ENCODE measurements at regions of chr6 and their contacts with region 1.

Region 1: GRCh38 chr6:113858480-113859348 is 1.6 kb downstream of the MARCKS start:
- DNase-seq: peak; percentile 90
- H3K4me3 Mint-ChIP-seq: no peak overlapping the region
- H3K27ac Mint-ChIP-seq: no peak overlapping the region
- H3K4me1 Mint-ChIP-seq: peaks cover 6% of the 10 kb centered on the region
- H3K27me3 Mint-ChIP-seq: no peaks in the 10 kb centered on the region
- CTCF ChIP-seq: peak; percentile 98

Region 2: GRCh38 chr6:112780498-112781096 is 1078.1 kb before region 1 on chr6:
- CTCF ChIA-PET with region 1: interaction called, 16 read pairs
- POLR2A ChIA-PET with region 1: interaction called, 3 read pairs
- intact Hi-C with region 1: loop called (anchors 1 kb)
- DNase-seq: peak; percentile 88
- H3K4me3 Mint-ChIP-seq: no peak overlapping the region
- H3K27ac Mint-ChIP-seq: no peak overlapping the region
- H3K4me1 Mint-ChIP-seq: no peaks in the 10 kb centered on the region
- H3K27me3 Mint-ChIP-seq: no peaks in the 10 kb centered on the region
- CTCF ChIP-seq: peak; percentile 87

Region 3: DNA sequence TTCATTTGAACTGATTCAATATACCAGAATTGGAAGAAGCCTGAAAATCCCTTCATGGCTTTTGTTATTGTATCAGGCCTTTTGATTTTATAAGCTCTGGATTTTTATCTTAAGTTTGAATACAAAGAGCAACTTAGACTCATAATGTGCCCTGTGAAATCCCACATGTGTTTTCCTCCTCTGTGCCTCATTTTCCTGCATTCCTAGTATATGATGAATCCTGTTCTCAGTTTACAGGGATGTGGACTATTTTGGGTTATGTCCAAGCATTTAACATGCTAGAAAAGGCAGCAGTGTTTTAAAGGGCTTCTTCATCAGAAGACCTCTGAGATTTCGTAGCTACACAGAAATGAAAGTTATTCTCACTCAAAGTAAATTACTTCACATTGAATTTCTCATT is 1056.6 kb before region 1 on chr6:
- CTCF ChIA-PET with region 1: no interaction called
- POLR2A ChIA-PET with region 1: no interaction called
- intact Hi-C with region 1: no loop called
- DNase-seq: peak; percentile 50
- H3K4me3 Mint-ChIP-seq: no peak overlapping the region
- H3K27ac Mint-ChIP-seq: peak overlapping the region; percentile 20
- H3K4me1 Mint-ChIP-seq: peaks cover 9% of the 10 kb centered on the region
- H3K27me3 Mint-ChIP-seq: no peaks in the 10 kb centered on the region
- CTCF ChIP-seq: no peak

Region 4: GRCh38 chr6:113306552-113307145 is 552.1 kb before region 1 on chr6:
- CTCF ChIA-PET with region 1: interaction called, 14 read pairs
- POLR2A ChIA-PET with region 1: interaction called, 24 read pairs
- intact Hi-C with region 1: loop called (anchors 1 kb)
- DNase-seq: peak; percentile 81
- H3K4me3 Mint-ChIP-seq: no peak overlapping the region
- H3K27ac Mint-ChIP-seq: no peak overlapping the region
- H3K4me1 Mint-ChIP-seq: no peaks in the 10 kb centered on the region
- H3K27me3 Mint-ChIP-seq: no peaks in the 10 kb centered on the region
- CTCF ChIP-seq: peak; percentile 78

Region 5: DNA sequence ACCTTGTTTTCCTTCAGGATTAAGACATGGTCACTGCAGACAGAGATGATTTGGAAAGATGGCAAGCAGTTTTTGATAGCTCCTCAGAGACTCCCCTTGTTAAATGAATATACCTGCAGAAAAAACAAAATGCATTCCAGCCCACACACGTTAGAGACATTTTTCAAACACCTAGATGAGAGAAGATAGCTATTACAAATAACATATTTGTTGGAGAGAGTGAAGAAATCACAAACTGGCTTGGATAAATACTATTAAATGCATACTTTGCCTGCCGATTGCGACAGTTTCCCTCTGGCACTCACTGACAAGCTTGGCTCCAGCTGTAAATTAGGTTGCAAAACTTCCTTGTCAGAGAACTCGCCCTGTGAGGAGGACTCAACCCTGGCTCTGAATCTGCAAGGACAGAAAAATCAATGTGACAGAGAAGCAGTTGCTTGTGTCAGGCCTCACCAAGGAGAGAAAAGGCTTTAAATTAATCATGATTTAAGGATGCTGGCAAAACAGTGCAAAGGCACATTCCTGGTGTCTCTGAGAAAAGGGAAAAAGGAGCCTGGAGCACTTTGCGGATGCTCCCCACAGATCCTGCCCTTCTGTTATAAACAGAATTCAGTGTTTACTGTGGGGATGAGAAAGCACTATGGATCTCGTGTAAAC is 425.3 kb before region 1 on chr6:
- CTCF ChIA-PET with region 1: interaction called, 3 read pairs
- POLR2A ChIA-PET with region 1: interaction called, 15 read pairs
- intact Hi-C with region 1: no loop called
- DNase-seq: peak; percentile 95
- H3K4me3 Mint-ChIP-seq: peak overlapping the region; percentile 57
- H3K27ac Mint-ChIP-seq: peak overlapping the region; percentile 43
- H3K4me1 Mint-ChIP-seq: peaks cover 21% of the 10 kb centered on the region
- H3K27me3 Mint-ChIP-seq: no peaks in the 10 kb centered on the region
- CTCF ChIP-seq: no peak

Region 6: GRCh38 chr6:113464959-113465358 is 393.8 kb before region 1 on chr6:
- CTCF ChIA-PET with region 1: interaction called, 3 read pairs
- POLR2A ChIA-PET with region 1: interaction called, 11 read pairs
- intact Hi-C with region 1: no loop called
- DNase-seq: peak; percentile 89
- H3K4me3 Mint-ChIP-seq: no peak overlapping the region
- H3K27ac Mint-ChIP-seq: peak overlapping the region; percentile 3
- H3K4me1 Mint-ChIP-seq: peaks cover 13% of the 10 kb centered on the region
- H3K27me3 Mint-ChIP-seq: no peaks in the 10 kb centered on the region
- CTCF ChIP-seq: no peak

Region 7: GRCh38 chr6:113649276-113649675 is 209.4 kb before region 1 on chr6:
- CTCF ChIA-PET with region 1: interaction called, 6 read pairs
- POLR2A ChIA-PET with region 1: interaction called, 13 read pairs
- intact Hi-C with region 1: loop called (anchors 2 kb)
- DNase-seq: peak; percentile 95
- H3K4me3 Mint-ChIP-seq: peak overlapping the region; percentile 62
- H3K27ac Mint-ChIP-seq: peak overlapping the region; percentile 93
- H3K4me1 Mint-ChIP-seq: peaks cover 35% of the 10 kb centered on the region
- H3K27me3 Mint-ChIP-seq: no peaks in the 10 kb centered on the region
- CTCF ChIP-seq: no peak

Region 8: DNA sequence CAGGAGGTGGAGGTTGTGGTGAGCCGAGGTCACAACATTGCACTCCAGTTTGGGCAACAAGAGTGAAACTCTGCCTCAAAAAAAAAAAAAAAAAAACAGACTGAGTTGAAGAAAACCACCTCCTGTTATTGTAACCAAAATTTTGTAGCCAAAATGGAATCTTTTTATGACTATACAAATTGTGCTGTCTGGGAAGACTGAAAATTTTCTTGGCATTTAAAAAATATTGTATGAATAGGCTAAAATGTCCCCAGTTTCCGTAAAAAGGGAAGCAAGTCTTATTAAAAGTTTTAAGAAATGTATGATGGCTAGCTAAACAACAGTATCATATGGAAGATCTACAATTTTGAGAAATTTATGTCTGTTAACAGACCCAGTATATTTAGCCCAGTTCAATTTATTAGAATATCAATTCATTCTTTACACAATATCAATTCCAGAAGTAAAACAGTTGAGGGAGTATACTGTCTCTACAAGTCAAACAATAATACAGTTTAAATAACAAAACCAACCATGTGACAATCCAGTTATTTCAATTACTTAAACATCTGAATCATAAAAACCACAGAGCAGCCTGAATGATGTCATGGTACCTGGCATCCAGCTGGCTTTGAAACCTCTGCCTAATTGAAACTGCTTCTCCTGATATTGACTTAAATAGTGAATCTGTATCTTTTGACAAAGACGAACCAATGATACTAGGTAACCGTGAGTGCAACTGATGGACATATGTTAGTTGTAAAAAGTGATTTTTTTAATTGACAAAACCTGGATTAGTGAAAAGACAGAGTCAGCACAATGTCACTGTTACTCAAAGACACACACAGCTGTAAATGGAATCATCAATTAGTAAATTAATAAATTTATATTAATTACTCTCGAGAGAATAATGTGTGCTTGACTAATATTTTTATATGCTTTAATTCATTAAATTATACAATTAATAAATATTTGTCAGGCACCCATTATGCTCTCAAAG is 168.1 kb before region 1 on chr6:
- CTCF ChIA-PET with region 1: interaction called, 7 read pairs
- POLR2A ChIA-PET with region 1: interaction called, 6 read pairs
- intact Hi-C with region 1: loop called (anchors 1 kb)
- DNase-seq: peak; percentile 88
- H3K4me3 Mint-ChIP-seq: no peak overlapping the region
- H3K27ac Mint-ChIP-seq: no peak overlapping the region
- H3K4me1 Mint-ChIP-seq: peaks cover 29% of the 10 kb centered on the region
- H3K27me3 Mint-ChIP-seq: no peaks in the 10 kb centered on the region
- CTCF ChIP-seq: no peak

Region 9: GRCh38 chr6:113920663-113921267 is 62.1 kb after region 1 on chr6:
- CTCF ChIA-PET with region 1: no interaction called
- POLR2A ChIA-PET with region 1: no interaction called
- intact Hi-C with region 1: no loop called
- DNase-seq: no peak
- H3K4me3 Mint-ChIP-seq: no peak overlapping the region
- H3K27ac Mint-ChIP-seq: no peak overlapping the region
- H3K4me1 Mint-ChIP-seq: no peaks in the 10 kb centered on the region
- H3K27me3 Mint-ChIP-seq: no peaks in the 10 kb centered on the region
- CTCF ChIP-seq: no peak